Right ventricle myocardium inferior (tissue), 1 donor: ENCODE measurements at regions of chr1 and their contacts with region 1.

Region 1: DNA sequence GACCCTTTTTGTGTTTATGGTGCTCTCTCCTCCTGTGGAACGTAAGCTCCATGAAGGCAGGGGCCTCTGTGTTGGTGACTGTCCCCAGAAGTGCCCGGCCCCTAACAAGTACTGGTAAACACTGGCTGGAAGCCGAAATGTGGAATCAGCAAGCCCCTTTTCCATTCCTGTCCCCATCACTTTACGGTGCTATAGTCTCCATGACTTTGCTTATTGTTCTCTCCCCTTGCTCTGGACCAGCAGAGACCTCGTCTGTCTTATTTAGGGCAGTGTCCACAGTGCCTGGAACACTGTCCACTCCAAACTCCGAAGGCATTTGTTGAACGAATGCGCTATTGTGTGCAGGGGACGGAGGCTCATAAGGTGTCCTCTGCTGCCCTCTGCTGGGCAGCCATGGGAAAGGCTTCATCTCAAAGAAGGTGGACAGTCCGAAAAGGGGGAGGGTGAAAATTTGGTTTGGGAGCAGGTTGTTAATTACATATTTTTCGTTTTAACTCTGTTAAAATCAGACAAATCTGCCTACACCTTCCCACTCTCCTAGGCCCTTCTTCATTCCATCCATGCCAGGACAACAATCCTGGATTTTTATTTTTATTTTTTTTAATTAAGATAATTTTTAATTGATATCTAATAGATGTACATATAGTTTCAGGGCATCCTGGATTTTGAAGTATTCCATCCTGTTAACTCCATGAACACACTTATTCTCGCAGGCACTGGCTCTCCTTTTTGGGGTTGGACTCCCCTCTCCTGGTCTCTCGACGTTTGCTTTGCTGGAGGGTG is 115.6 kb downstream of the PGBD5 start:
- DNase-seq: peak; percentile 90
- ATAC-seq: peak; percentile 88

Region 2: GRCh38 chr1:229848752-229849677 is 461.6 kb before region 1 on chr1:
- intact Hi-C with region 1: loop called (anchors 10 kb)
- DNase-seq: no peak
- ATAC-seq: no peak

Region 3: GRCh38 chr1:230002164-230002803 is 308.3 kb before region 1 on chr1:
- intact Hi-C with region 1: no loop called
- DNase-seq: peak; percentile 76
- ATAC-seq: peak; percentile 89

Region 4: GRCh38 chr1:230581446-230582079 is 271.0 kb after region 1 on chr1:
- intact Hi-C with region 1: no loop called
- DNase-seq: peak; percentile 26
- ATAC-seq: no peak